HEK293 (cell line): ENCODE measurements at regions of chr1 and their contacts with region 1.

Region 1: DNA sequence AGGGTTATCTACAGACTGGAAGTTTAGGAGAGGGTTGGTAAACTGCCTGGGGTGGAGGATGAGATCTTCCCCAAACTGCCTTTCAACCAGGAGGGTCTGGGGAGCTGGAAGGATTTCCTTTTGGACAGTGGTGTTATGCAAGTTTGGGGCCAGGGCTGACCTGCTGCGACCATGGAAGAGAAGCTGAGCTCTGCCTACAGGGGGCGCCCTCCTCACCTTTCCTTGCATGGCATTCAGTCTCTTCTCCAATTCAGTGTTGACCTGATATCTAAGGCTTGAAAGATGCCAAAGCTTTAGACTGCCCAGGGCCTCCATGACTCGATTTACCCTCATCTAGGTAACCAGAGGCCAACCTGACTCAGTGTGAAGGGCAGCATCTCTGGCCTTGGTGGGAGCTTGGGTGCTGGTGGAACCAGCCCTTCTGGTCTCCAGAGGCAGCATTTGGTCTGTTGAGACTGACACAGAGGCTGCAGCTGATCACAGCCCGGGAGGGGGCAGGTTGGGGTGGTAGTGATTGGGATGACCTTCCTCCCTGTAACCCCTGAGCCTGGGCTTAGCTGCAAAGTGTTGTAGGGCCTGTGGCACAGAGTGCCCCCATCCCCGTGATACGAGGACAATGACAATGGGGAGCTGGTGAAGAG is 170.0 kb downstream of the GRIK3 start:
- H3K4me3 ChIP-seq: no peak overlapping the region
- H3K27ac ChIP-seq: no peak overlapping the region
- H3K4me1 ChIP-seq: no peaks in the 10 kb centered on the region
- CTCF ChIP-seq: peak; percentile 41; the same call in 1 of the 2 replicates

Region 2: DNA sequence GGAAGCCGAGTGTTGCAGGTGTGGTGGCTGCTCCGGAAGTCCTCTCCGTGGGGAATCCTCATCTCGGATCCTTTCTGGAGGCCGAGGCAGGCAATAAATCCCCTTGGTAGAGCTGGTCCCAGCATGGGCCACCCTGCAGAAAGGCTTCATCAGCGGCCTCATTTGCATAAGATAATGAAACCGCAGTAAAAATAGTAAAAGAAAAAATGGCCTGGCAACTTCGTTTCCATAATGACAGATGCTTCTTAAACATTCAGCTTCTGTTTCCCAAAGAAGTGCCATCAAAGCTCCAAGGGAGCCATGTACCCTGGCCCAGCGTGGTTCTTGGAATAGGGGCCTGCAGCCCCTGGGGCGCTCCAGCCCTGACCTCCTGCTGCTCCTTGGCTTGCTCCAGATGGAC is 74.1 kb before region 1 on chr1:
- CTCF ChIA-PET with region 1: no interaction called
- POLR2A ChIA-PET with region 1: no interaction called
- H3K4me3 ChIP-seq: no peak overlapping the region
- H3K27ac ChIP-seq: no peak overlapping the region
- H3K4me1 ChIP-seq: no peaks in the 10 kb centered on the region
- CTCF ChIP-seq: no peak

Region 3: DNA sequence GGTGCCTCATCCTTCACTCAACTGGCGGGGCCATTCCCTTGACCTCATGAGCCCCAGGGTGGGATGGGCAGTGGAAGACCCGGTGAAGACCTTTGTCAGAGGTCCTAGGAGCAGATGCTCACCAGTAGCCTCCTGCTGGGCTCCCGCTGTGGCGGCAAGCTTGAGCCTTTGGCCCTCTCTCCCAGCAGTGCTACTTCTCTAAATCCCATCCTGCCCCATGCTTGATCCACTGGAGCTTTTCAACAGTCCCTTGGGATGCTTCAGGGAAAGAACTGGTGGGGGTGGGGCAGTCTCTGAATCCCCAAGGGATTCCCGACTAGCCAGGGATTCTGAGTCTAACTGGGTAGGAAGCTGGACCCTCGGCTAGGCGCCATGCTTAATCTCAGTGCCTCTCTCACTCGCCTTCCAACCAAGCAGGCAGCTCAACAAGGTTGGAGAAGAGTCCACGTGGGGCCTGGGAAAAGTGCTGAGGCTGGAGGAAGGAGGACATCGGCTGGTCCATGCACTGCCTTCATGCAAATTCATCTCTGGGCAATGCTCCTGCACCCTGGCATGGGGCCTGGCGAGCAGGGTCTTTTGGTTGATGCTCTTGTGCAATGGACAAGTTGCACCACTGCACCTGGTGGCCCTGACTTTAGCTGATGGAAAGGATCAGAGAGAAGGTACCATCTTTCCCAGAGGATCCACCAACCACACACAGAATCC is 20.2 kb before region 1 on chr1:
- CTCF ChIA-PET with region 1: interaction called, 10 read pairs
- POLR2A ChIA-PET with region 1: no interaction called
- H3K4me3 ChIP-seq: no peak overlapping the region
- H3K27ac ChIP-seq: no peak overlapping the region
- H3K4me1 ChIP-seq: no peaks in the 10 kb centered on the region
- CTCF ChIP-seq: no peak

Region 4: GRCh38 chr1:36880155-36881067 is 16.1 kb after region 1 on chr1:
- CTCF ChIA-PET with region 1: interaction called, 15 read pairs
- POLR2A ChIA-PET with region 1: no interaction called
- H3K4me3 ChIP-seq: no peak overlapping the region
- H3K27ac ChIP-seq: no peak overlapping the region
- H3K4me1 ChIP-seq: no peaks in the 10 kb centered on the region
- CTCF ChIP-seq: no peak

Region 5: DNA sequence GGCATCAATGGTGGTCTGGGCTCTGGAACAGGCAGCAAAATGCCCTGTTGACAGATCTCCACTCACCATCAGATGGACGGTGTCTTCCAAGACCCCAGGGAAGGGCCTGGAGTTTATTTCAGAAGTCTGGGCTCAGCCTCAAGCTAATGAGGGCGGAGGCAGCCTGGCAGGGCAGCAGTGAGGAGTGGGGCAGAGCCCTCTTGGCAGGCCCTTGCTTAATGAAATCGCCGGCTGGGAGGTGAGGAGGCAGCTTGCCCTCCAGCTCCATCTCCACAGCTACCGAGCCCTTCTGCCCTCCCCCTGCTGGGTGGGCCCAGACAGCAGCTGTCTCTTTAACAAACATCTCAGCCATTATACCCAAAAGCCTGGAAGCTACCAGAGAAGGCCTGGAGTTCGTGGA is 192.0 kb after region 1 on chr1:
- CTCF ChIA-PET with region 1: no interaction called
- POLR2A ChIA-PET with region 1: no interaction called
- H3K4me3 ChIP-seq: no peak overlapping the region
- H3K27ac ChIP-seq: no peak overlapping the region
- H3K4me1 ChIP-seq: no peaks in the 10 kb centered on the region
- CTCF ChIP-seq: no peak